Activated CD8-positive, alpha-beta T cell treated with anti-CD3 and anti-CD28 coated beads for 36 hours (primary cell): ENCODE measurements at regions of chr9 and their contacts with region 1.

Region 1: GRCh38 chr9:35646533-35647265 is 4.0 kb downstream of the SIT1 start:
- DNase-seq: peak; percentile 94
- ATAC-seq: peak; percentile 84
- H3K4me3 Mint-ChIP-seq: peak overlapping the region; percentile 85
- H3K27ac Mint-ChIP-seq: peak overlapping the region; percentile 79
- H3K4me1 Mint-ChIP-seq: peaks cover 44% of the 10 kb centered on the region
- H3K27me3 Mint-ChIP-seq: no peaks in the 10 kb centered on the region
- CTCF ChIP-seq: peak; percentile 83

Region 2: GRCh38 chr9:35432076-35432475 is 214.6 kb before region 1 on chr9:
- CTCF ChIA-PET with region 1: no interaction called
- POLR2A ChIA-PET with region 1: no interaction called
- intact Hi-C with region 1: no loop called
- DNase-seq: no peak
- ATAC-seq: no peak
- H3K4me3 Mint-ChIP-seq: no peak overlapping the region
- H3K27ac Mint-ChIP-seq: no peak overlapping the region
- H3K4me1 Mint-ChIP-seq: no peaks in the 10 kb centered on the region
- H3K27me3 Mint-ChIP-seq: peaks cover 29% of the 10 kb centered on the region
- CTCF ChIP-seq: no peak

Region 3: DNA sequence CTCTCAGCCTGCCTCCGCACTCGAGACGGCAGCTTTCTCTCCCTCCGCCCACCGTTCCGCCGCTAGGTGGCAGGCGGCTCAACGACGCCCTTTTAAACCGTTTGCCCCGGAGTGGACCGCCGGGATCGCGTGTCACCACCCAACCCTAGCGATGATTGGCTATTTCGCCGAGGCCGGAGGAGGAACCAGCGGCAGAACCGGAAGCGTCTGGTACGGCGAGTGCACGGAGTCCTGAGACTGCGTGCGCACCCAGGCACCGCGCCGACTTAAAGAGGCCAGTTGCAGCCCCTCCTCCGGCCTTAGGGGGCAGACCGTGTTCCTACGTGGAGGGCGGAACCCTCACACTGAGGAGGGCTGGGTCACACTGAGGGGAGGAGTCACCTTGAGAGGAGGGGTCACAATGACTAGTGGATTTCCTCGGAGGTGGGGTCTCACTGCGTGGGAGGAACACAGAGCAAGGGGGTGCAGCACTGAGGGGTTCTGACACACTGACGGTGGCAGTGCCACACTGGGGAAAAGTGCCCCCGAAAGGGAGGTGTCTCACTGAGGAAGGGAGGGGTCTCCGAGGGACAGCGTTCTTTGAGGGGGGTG is 42.6 kb before region 1 on chr9:
- CTCF ChIA-PET with region 1: interaction called, 21 read pairs
- POLR2A ChIA-PET with region 1: interaction called, 10 read pairs
- intact Hi-C with region 1: no loop called
- DNase-seq: peak; percentile 100
- ATAC-seq: peak; percentile 95
- H3K4me3 Mint-ChIP-seq: peak overlapping the region; percentile 87
- H3K27ac Mint-ChIP-seq: peak overlapping the region; percentile 95
- H3K4me1 Mint-ChIP-seq: peaks cover 28% of the 10 kb centered on the region
- H3K27me3 Mint-ChIP-seq: no peaks in the 10 kb centered on the region
- CTCF ChIP-seq: peak; percentile 95

Region 4: GRCh38 chr9:35657546-35658136 is 10.9 kb after region 1 on chr9 and contains the start of gene RMRP:
- CTCF ChIA-PET with region 1: interaction called, 98 read pairs
- POLR2A ChIA-PET with region 1: interaction called, 64 read pairs
- intact Hi-C with region 1: no loop called
- DNase-seq: peak; percentile 97
- ATAC-seq: peak; percentile 95
- H3K4me3 Mint-ChIP-seq: peak within 1 kb of the TSS; percentile 81
- H3K27ac Mint-ChIP-seq: peak within 1 kb of the TSS; percentile 96
- H3K4me1 Mint-ChIP-seq: peaks cover 59% of the 10 kb centered on the region
- H3K27me3 Mint-ChIP-seq: peaks cover 2% of the 10 kb centered on the region
- CTCF ChIP-seq: no peak
- total RNA-seq, gene RMRP: 13,164 to 13,311 TPM

Region 5: GRCh38 chr9:35664531-35665470 is 18.1 kb after region 1 on chr9 and contains the start of gene ARHGEF39:
- CTCF ChIA-PET with region 1: interaction called, 98 read pairs
- POLR2A ChIA-PET with region 1: interaction called, 4 read pairs
- intact Hi-C with region 1: no loop called
- DNase-seq: peak; percentile 80
- ATAC-seq: peak; percentile 89
- H3K4me3 Mint-ChIP-seq: peak within 1 kb of the TSS; percentile 84
- H3K27ac Mint-ChIP-seq: peak within 1 kb of the TSS; percentile 63
- H3K4me1 Mint-ChIP-seq: peaks cover 40% of the 10 kb centered on the region
- H3K27me3 Mint-ChIP-seq: no peaks in the 10 kb centered on the region
- CTCF ChIP-seq: no peak
- total RNA-seq, gene ARHGEF39: 16.0 to 19.9 TPM

Region 6: DNA sequence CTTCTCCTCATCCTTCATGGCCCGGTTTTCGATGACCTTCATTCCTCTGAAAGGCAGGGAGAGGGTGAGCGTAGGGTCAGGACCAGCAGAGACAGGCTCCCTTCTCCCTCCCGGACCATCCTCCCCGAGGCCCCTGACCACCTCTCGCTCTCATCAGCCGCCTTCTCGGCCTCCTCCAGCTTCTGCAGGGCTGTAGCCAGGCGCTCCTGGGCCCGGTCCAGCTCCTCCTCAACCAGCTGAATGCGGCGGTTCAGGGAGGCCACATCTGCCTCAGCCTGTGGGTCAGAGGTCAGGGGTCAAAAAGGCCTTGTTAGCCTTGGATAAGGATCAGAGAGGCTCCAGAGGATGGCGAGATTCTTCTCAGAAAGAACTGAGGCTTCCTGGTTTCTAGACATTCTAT is 38.8 kb after region 1 on chr9:
- CTCF ChIA-PET with region 1: no interaction called
- POLR2A ChIA-PET with region 1: no interaction called
- intact Hi-C with region 1: no loop called
- DNase-seq: no peak
- ATAC-seq: no peak
- H3K4me3 Mint-ChIP-seq: no peak overlapping the region
- H3K27ac Mint-ChIP-seq: no peak overlapping the region
- H3K4me1 Mint-ChIP-seq: peaks cover 18% of the 10 kb centered on the region
- H3K27me3 Mint-ChIP-seq: no peaks in the 10 kb centered on the region
- CTCF ChIP-seq: no peak

Region 7: GRCh38 chr9:35859310-35859989 is 212.8 kb after region 1 on chr9:
- CTCF ChIA-PET with region 1: no interaction called
- POLR2A ChIA-PET with region 1: no interaction called
- intact Hi-C with region 1: no loop called
- DNase-seq: peak; percentile 58
- ATAC-seq: peak; percentile 84
- H3K4me3 Mint-ChIP-seq: no peak overlapping the region
- H3K27ac Mint-ChIP-seq: no peak overlapping the region
- H3K4me1 Mint-ChIP-seq: no peaks in the 10 kb centered on the region
- H3K27me3 Mint-ChIP-seq: peaks cover 5% of the 10 kb centered on the region
- CTCF ChIP-seq: no peak